ENCODE measurements at regions of chr4 and their contacts with region 1.

Region 1: DNA sequence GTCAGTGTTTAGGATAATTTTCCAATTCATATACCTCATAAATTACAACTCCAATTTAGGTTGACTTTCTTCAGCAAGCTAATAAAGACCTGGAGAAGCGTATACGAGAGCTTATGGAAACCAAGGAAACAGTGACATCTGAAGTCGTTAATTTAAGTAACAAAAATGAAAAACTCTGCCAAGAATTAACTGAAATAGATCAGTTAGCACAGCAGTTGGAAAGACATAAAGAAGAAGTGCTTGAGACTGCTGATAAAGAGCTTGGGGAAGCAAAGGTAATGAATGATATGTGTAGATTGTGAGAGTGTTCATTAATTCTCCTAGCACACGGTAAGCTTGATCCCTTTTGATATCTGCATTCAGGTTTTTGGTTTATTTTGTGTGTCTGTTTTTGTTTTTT is 16.8 kb downstream of the CEP135 start:
- DNase-seq: no peak
- H3K4me3 ChIP-seq: no peak overlapping the region
- H3K27ac ChIP-seq: no peak overlapping the region
- H3K4me1 ChIP-seq: no peaks in the 10 kb centered on the region
- H3K27me3 ChIP-seq: no peaks in the 10 kb centered on the region
- CTCF ChIP-seq: no peak
- POLR2A ChIP-seq: no peak

Region 2: DNA sequence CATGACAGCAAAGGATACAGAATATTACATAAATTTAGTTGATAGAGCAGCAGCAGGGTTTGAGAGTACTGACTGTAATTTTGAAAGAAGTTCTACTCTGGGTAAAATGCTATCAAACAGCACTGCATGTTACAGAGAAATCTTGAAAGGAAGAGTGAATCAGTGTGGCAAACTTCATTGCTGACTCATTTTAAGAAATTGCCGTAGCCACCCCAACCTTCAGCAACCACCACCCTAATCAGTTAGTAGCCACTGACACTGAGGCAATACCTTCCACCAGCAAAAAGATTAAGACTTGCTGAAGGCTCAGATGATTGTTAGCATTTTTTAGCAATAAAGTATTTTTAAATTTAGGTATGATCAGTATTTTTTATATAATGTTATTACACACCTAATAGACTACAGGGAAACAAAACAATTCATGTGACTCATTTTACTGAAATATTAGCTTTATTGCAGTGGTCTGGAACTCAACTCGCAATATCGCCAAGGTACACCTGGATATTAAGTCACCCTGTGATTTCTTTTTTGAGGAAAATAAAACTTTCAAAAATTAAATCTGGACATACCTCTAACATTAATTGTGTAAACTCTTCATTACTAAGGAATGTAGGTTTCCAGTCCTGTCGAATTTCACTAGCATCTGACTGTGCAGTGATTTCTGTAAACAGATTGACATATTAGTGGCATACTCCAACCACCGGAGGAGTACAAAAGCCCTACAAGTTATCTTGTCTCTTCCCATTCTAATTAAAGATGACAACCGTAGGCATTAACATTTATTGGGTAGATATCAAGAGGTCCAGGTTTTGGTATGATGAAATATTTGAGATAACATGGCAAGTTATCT is 490.0 kb before region 1 on chr4:
- CTCF ChIA-PET with region 1: no interaction called
- POLR2A ChIA-PET with region 1: interaction called, 10 read pairs
- dilution Hi-C with region 1: no loop called
- intact Hi-C with region 1: no loop called
- DNase-seq: peak; percentile 29
- H3K4me3 ChIP-seq: no peak overlapping the region
- H3K27ac ChIP-seq: no peak overlapping the region
- H3K4me1 ChIP-seq: peaks cover 4% of the 10 kb centered on the region
- H3K27me3 ChIP-seq: no peaks in the 10 kb centered on the region
- CTCF ChIP-seq: no peak
- POLR2A ChIP-seq: no peak

Region 3: GRCh38 chr4:55675196-55675793 is 290.3 kb before region 1 on chr4:
- CTCF ChIA-PET with region 1: no interaction called
- POLR2A ChIA-PET with region 1: no interaction called
- dilution Hi-C with region 1: no loop called
- intact Hi-C with region 1: no loop called
- DNase-seq: no peak
- H3K4me3 ChIP-seq: no peak overlapping the region
- H3K27ac ChIP-seq: no peak overlapping the region
- H3K4me1 ChIP-seq: no peaks in the 10 kb centered on the region
- H3K27me3 ChIP-seq: peaks cover 3 to 6% of the 10 kb centered on the region in 2 experiments
- CTCF ChIP-seq: no peak
- POLR2A ChIP-seq: no peak

Region 4: DNA sequence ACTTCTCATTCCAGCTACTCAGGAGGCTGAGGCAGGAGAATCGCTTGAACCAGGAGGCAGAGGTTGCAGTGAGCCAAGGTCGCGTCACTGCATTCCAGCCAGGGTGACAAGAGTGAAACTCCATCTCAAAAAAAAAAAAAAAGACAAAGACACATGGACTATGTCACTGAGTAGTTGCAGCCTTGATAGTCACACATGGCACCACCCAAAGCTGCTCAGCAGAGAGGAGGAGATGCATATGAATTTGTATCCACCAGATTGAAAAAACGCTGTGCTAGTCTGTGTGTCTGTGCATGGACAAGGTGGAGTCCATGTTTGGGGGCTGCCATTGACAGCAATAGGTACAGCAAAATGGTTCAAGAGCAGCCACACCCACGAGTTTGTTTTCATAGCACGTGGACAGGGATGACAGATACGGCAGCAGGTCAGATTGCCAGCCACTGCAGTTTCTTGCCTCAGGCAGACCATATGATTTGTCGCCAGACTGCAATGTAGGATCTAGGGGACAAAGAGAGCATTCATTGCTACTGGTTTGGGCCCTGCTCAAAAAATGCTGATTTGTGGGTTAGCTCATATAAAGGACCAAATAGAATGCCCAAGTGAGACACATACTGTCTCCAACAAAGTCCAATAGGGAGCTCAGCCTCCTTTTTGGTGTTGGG is 73.0 kb after region 1 on chr4:
- CTCF ChIA-PET with region 1: no interaction called
- POLR2A ChIA-PET with region 1: no interaction called
- dilution Hi-C with region 1: no loop called
- intact Hi-C with region 1: no loop called
- DNase-seq: no peak
- H3K4me3 ChIP-seq: no peak overlapping the region
- H3K27ac ChIP-seq: no peak overlapping the region
- H3K4me1 ChIP-seq: no peaks in the 10 kb centered on the region
- H3K27me3 ChIP-seq: peaks cover 10 to 16% of the 10 kb centered on the region in 2 experiments
- CTCF ChIP-seq: no peak
- POLR2A ChIP-seq: no peak

Measured in endothelial cell of umbilical vein (primary cell).